Activated naive CD8-positive, alpha-beta T cell treated with anti-CD3 and anti-CD28 coated beads, Interleukin-2, amount 10 ng/mL, durations not matched to agents 7 days and 5 days (primary cell): ENCODE measurements at regions of chr22 and their contacts with region 1.

Region 1: GRCh38 chr22:41780746-41781505 is 19.6 kb upstream of the CCDC134 start:
- DNase-seq: peak; percentile 76
- ATAC-seq: peak; percentile 99
- H3K4me3 Mint-ChIP-seq: peak overlapping the region; percentile 82
- H3K27ac Mint-ChIP-seq: peak overlapping the region; percentile 96
- H3K4me1 Mint-ChIP-seq: peaks cover 39% of the 10 kb centered on the region
- H3K27me3 Mint-ChIP-seq: no peaks in the 10 kb centered on the region

Region 2: GRCh38 chr22:41688365-41689211 is 92.3 kb before region 1 on chr22 and contains the start of gene SNU13:
- POLR2A ChIA-PET with region 1: interaction called, 18 read pairs
- DNase-seq: peak; percentile 91
- ATAC-seq: peak; percentile 90
- H3K4me3 Mint-ChIP-seq: peak within 1 kb of the TSS; percentile 95
- H3K27ac Mint-ChIP-seq: peak within 1 kb of the TSS; percentile 99
- H3K4me1 Mint-ChIP-seq: peaks cover 22% of the 10 kb centered on the region
- H3K27me3 Mint-ChIP-seq: no peaks in the 10 kb centered on the region
- total RNA-seq, gene SNU13: 150 to 153 TPM

Region 3: GRCh38 chr22:41816181-41816621 is 35.3 kb after region 1 on chr22:
- POLR2A ChIA-PET with region 1: no interaction called
- DNase-seq: no peak
- ATAC-seq: no peak
- H3K4me3 Mint-ChIP-seq: no peak overlapping the region
- H3K27ac Mint-ChIP-seq: no peak overlapping the region
- H3K4me1 Mint-ChIP-seq: peaks cover 6% of the 10 kb centered on the region
- H3K27me3 Mint-ChIP-seq: no peaks in the 10 kb centered on the region

Region 4: GRCh38 chr22:41862160-41862529 is 81.2 kb after region 1 on chr22:
- POLR2A ChIA-PET with region 1: interaction called, 13 read pairs
- DNase-seq: no peak
- ATAC-seq: peak; percentile 51
- H3K4me3 Mint-ChIP-seq: peak overlapping the region; percentile 42
- H3K27ac Mint-ChIP-seq: no peak overlapping the region
- H3K4me1 Mint-ChIP-seq: peaks cover 37% of the 10 kb centered on the region
- H3K27me3 Mint-ChIP-seq: no peaks in the 10 kb centered on the region

Region 5: GRCh38 chr22:41946629-41947423 is 165.9 kb after region 1 on chr22 and contains the start of gene CENPM:
- POLR2A ChIA-PET with region 1: interaction called, 14 read pairs
- DNase-seq: peak; percentile 94
- ATAC-seq: peak; percentile 98
- H3K4me3 Mint-ChIP-seq: peak within 1 kb of the TSS; percentile 94
- H3K27ac Mint-ChIP-seq: peak within 1 kb of the TSS; percentile 91
- H3K4me1 Mint-ChIP-seq: peaks cover 31% of the 10 kb centered on the region
- H3K27me3 Mint-ChIP-seq: no peaks in the 10 kb centered on the region
- total RNA-seq, gene CENPM: 45.4 to 53.2 TPM